ENCODE measurements at regions of chr15 and their contacts with region 1.

Region 1: GRCh38 chr15:38817427-38818156 is 253.0 kb upstream of the RASGRP1 start:
- H3K4me3 Mint-ChIP-seq: peak overlapping the region; percentile 30
- H3K27ac Mint-ChIP-seq: no peak overlapping the region
- H3K4me1 Mint-ChIP-seq: peaks cover 4% of the 10 kb centered on the region
- H3K27me3 Mint-ChIP-seq: peaks cover 5% of the 10 kb centered on the region

Region 2: GRCh38 chr15:38707802-38708671 is 109.6 kb before region 1 on chr15:
- intact Hi-C with region 1: loop called (anchors 5 kb)
- H3K4me3 Mint-ChIP-seq: no peak overlapping the region
- H3K27ac Mint-ChIP-seq: no peak overlapping the region
- H3K4me1 Mint-ChIP-seq: no peaks in the 10 kb centered on the region
- H3K27me3 Mint-ChIP-seq: no peaks in the 10 kb centered on the region

Region 3: DNA sequence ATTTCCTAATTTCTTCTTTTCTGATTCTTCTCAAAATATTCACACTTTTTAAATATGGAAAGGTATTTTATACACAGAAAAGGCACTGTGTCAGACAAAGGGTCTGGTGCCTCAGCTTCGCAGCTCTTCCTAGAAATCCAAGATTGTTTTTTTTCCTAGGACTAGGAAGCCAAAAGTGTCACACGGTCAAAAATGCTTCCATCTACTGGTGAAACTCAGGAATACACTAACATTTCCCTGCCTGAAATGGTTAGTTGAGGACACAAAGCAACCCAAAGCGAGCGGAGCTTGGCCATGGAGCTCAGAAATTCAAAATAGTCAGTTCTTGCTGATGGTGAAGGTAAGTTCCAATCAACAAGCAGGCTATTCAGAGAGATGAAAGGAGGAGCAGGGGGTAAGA is 173.5 kb after region 1 on chr15:
- intact Hi-C with region 1: loop called (anchors 1 kb)
- H3K4me3 Mint-ChIP-seq: no peak overlapping the region
- H3K27ac Mint-ChIP-seq: no peak overlapping the region
- H3K4me1 Mint-ChIP-seq: no peaks in the 10 kb centered on the region
- H3K27me3 Mint-ChIP-seq: peaks cover 1% of the 10 kb centered on the region